ENCODE measurements at regions of chr1 and their contacts with region 1.

Region 1: GRCh38 chr1:92960395-92961130 is 699 bp downstream of the DIPK1A start:
- DNase-seq: peak in 8 of 9 donors; percentile 57 to 85 (median 76)
- ATAC-seq: peak; percentile 65
- H3K4me3 ChIP-seq: peak overlapping the region; percentile 58
- H3K4me3 Mint-ChIP-seq: peak overlapping the region in 9 of 10 donors; percentile 86 to 97 (median 90)
- H3K27ac ChIP-seq: peak overlapping the region; percentile 100
- H3K27ac Mint-ChIP-seq: peak overlapping the region; percentile 95 to 99 (median 98)
- H3K4me1 ChIP-seq: peaks cover 39 to 55% of the 10 kb centered on the region in 2 donors
- H3K4me1 Mint-ChIP-seq: peaks cover 37 to 46% (median 41%) of the 10 kb centered on the region in 7 donors
- H3K27me3 ChIP-seq: no peaks in the 10 kb centered on the region
- H3K27me3 Mint-ChIP-seq: no peaks in the 10 kb centered on the region

Region 2: DNA sequence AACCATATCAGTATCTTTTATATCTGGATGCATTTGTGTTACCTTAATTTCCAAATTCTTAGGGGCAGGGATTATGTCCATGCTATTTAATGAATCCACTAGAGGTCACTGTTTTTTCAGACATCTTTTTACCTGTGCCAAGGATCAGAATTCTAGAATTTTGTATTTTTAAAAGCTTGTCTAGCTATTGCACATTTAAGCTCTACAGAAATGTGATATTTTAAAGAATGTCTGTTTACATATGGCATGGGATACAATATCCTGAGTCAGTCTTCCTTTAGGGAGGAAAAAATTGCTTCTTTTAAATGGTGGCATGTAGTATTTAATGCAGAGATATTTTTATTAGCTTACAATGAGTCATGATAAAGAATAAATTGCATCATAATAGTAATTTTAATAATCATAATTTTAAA is 650.4 kb before region 1 on chr1:
- CTCF ChIA-PET with region 1: no interaction called
- POLR2A ChIA-PET with region 1: no interaction called
- intact Hi-C with region 1: loop called in 1 of 2 experiments (anchors 10 kb)
- DNase-seq: peak in 5 of 9 donors; percentile 32 to 48 (median 47)
- ATAC-seq: peak; percentile 66
- H3K4me3 ChIP-seq: no peak overlapping the region
- H3K4me3 Mint-ChIP-seq: no peak overlapping the region
- H3K27ac ChIP-seq: no peak overlapping the region
- H3K27ac Mint-ChIP-seq: no peak overlapping the region
- H3K4me1 ChIP-seq: peaks cover 15 to 18% of the 10 kb centered on the region in 2 donors
- H3K4me1 Mint-ChIP-seq: peaks cover 13 to 42% (median 33%) of the 10 kb centered on the region in 7 donors
- H3K27me3 ChIP-seq: no peaks in the 10 kb centered on the region
- H3K27me3 Mint-ChIP-seq: no peaks in the 10 kb centered on the region

Region 3: DNA sequence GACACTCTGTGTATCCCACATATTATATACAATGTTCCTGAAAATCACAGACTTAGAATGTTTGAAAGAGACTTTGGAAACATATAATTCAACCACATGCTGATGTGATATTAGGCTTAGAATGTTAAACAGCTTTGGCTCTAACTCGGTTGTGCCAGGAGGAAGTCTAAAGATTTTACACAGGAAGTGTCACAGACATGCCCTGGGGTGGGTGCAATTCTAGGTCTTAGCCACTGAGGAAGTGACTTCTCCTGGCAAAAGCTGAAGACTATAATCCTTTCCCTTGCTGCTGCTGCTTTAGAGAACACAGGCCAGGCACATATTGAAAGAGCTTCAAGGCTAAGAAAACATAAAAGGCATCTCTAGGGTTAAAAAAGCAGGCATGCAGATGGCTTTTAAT is 77.7 kb before region 1 on chr1:
- CTCF ChIA-PET with region 1: interaction called, 8 read pairs
- POLR2A ChIA-PET with region 1: interaction called, 20 read pairs
- intact Hi-C with region 1: loop called in 1 of 2 experiments (anchors 1 kb)
- DNase-seq: peak in 7 of 9 donors; percentile 43 to 65 (median 49)
- ATAC-seq: peak; percentile 95
- H3K4me3 ChIP-seq: no peak overlapping the region
- H3K4me3 Mint-ChIP-seq: peak overlapping the region in 9 of 10 donors; percentile 22 to 68 (median 51)
- H3K27ac ChIP-seq: peak overlapping the region; percentile 54
- H3K27ac Mint-ChIP-seq: peak overlapping the region; percentile 45 to 96 (median 92)
- H3K4me1 ChIP-seq: peaks cover 18 to 25% of the 10 kb centered on the region in 2 donors
- H3K4me1 Mint-ChIP-seq: peaks cover 24 to 61% (median 48%) of the 10 kb centered on the region in 7 donors
- H3K27me3 ChIP-seq: no peaks in the 10 kb centered on the region
- H3K27me3 Mint-ChIP-seq: no peaks in the 10 kb centered on the region

Region 4: DNA sequence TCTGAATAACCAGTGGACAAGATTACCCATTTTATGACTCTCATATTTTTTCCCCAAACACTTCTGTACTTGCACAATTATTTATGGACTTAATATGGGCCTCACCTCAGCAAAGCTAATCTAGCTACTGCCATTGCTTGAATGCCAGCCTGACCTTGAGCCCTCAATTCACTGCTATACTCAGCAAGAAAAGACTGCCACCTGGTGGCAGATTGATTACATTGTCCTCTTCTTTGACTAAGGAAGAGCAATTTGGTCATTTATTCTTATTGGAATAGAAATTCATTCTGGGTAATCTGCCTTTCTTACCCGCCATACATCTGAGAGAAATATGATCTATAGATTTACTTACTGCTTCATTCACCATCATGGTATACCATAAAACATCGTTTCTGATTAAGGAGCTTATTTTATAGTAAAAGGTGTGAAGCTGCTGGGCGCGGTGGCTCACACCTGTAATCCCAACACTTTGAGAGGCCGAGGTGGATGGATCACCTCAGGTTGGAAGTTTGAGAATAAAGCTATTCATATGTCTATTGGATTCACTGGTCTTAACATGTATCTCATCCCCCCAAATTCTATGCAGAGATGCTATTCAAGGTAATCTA is 33.6 kb after region 1 on chr1:
- CTCF ChIA-PET with region 1: interaction called, 175 read pairs
- POLR2A ChIA-PET with region 1: interaction called, 70 read pairs
- intact Hi-C with region 1: loop called (anchors 1 kb)
- DNase-seq: peak; percentile 10 to 85 (median 76)
- ATAC-seq: peak; percentile 94
- H3K4me3 ChIP-seq: no peak overlapping the region
- H3K4me3 Mint-ChIP-seq: peak overlapping the region in 2 of 10 donors; percentile 23 to 30
- H3K27ac ChIP-seq: no peak overlapping the region
- H3K27ac Mint-ChIP-seq: peak overlapping the region in 8 of 9 donors; percentile 6 to 87 (median 62)
- H3K4me1 ChIP-seq: peaks cover 36 to 38% of the 10 kb centered on the region in 2 donors
- H3K4me1 Mint-ChIP-seq: peaks cover 21 to 50% (median 47%) of the 10 kb centered on the region in 7 donors
- H3K27me3 ChIP-seq: no peaks in the 10 kb centered on the region
- H3K27me3 Mint-ChIP-seq: peaks cover 0 to 3% (median 0%) of the 10 kb centered on the region in 5 donors

Region 5: GRCh38 chr1:93061895-93062792 is 101.6 kb after region 1 on chr1:
- CTCF ChIA-PET with region 1: no interaction called
- POLR2A ChIA-PET with region 1: no interaction called
- intact Hi-C with region 1: loop called in 1 of 2 experiments (anchors 1 kb)
- DNase-seq: peak in 7 of 9 donors; percentile 14 to 54 (median 49)
- ATAC-seq: peak; percentile 80
- H3K4me3 ChIP-seq: no peak overlapping the region
- H3K4me3 Mint-ChIP-seq: no peak overlapping the region
- H3K27ac ChIP-seq: no peak overlapping the region
- H3K27ac Mint-ChIP-seq: peak overlapping the region in 1 of 9 donors; percentile 23
- H3K4me1 ChIP-seq: no peaks in the 10 kb centered on the region
- H3K4me1 Mint-ChIP-seq: peaks cover 0 to 6% (median 3%) of the 10 kb centered on the region in 7 donors
- H3K27me3 ChIP-seq: peaks cover 0 to 1% of the 10 kb centered on the region in 2 donors
- H3K27me3 Mint-ChIP-seq: peaks cover 5 to 53% (median 16%) of the 10 kb centered on the region in 5 donors

Region 6: GRCh38 chr1:93537924-93538323 is 577.4 kb after region 1 on chr1:
- CTCF ChIA-PET with region 1: no interaction called
- POLR2A ChIA-PET with region 1: no interaction called
- intact Hi-C with region 1: no loop called
- DNase-seq: no peak
- ATAC-seq: no peak
- H3K4me3 ChIP-seq: no peak overlapping the region
- H3K4me3 Mint-ChIP-seq: no peak overlapping the region
- H3K27ac ChIP-seq: no peak overlapping the region
- H3K27ac Mint-ChIP-seq: no peak overlapping the region
- H3K4me1 ChIP-seq: no peaks in the 10 kb centered on the region
- H3K4me1 Mint-ChIP-seq: no peaks in the 10 kb centered on the region
- H3K27me3 ChIP-seq: no peaks in the 10 kb centered on the region
- H3K27me3 Mint-ChIP-seq: peaks cover 0 to 17% (median 5%) of the 10 kb centered on the region in 5 donors

Region 7: DNA sequence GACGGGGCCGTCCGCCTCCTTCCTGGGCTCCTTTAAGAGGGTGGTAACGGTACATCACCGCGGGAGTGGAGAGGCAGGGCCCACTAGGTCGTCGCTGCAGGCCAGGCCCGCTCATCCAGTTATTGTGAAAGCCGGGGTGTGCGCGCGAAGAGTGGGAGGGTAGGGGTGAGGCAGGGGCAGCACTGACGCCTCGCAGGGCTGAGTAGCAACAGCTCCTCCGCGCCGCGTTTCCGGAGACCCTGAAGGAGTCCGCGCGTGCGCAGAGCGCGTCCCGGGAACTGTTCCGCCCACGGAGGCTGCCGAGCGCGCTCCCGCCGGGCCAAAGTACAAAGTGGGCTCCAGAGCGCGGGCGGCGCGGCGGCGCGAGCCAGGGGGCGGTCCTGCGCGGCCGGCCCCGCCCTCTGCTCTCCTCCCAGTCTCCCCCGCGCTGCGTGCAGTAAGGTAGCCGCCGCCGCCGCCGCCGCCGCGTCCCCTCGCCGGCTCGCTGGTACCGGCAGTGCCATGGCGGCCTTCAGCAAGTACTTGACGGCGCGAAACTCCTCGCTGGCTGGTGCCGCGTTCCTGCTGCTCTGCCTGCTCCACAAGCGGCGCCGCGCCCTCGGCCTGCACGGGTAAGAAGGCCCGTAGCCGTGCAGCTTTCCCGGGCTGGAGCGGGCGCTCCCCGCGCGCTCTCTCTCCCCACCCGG is 1457.6 kb after region 1 on chr1 and contains the start of gene ABCD3:
- CTCF ChIA-PET with region 1: no interaction called
- POLR2A ChIA-PET with region 1: no interaction called
- intact Hi-C with region 1: loop called in 1 of 2 experiments (anchors 5 kb)
- DNase-seq: peak; percentile 97 to 99 (median 99)
- ATAC-seq: peak; percentile 97
- H3K4me3 ChIP-seq: peak within 1 kb of the TSS; percentile 79
- H3K4me3 Mint-ChIP-seq: no peak within 1 kb of the TSS
- H3K27ac ChIP-seq: peak within 1 kb of the TSS; percentile 76
- H3K27ac Mint-ChIP-seq: peak within 1 kb of the TSS in 7 of 9 donors; percentile 68 to 91 (median 83)
- H3K4me1 ChIP-seq: peaks cover 10 to 15% of the 10 kb centered on the region in 2 donors
- H3K4me1 Mint-ChIP-seq: peaks cover 25 to 42% (median 40%) of the 10 kb centered on the region in 7 donors
- H3K27me3 ChIP-seq: no peaks in the 10 kb centered on the region
- H3K27me3 Mint-ChIP-seq: peaks cover 0 to 16% (median 0%) of the 10 kb centered on the region in 5 donors
- total RNA-seq, gene ABCD3: 18.0 to 31.2 (median 25.0) TPM

Measured in naive thymus-derived CD4-positive, alpha-beta T cell (primary cell).